H1 (cell line): ENCODE measurements at regions of chr11 and their contacts with region 1.

Region 1: DNA sequence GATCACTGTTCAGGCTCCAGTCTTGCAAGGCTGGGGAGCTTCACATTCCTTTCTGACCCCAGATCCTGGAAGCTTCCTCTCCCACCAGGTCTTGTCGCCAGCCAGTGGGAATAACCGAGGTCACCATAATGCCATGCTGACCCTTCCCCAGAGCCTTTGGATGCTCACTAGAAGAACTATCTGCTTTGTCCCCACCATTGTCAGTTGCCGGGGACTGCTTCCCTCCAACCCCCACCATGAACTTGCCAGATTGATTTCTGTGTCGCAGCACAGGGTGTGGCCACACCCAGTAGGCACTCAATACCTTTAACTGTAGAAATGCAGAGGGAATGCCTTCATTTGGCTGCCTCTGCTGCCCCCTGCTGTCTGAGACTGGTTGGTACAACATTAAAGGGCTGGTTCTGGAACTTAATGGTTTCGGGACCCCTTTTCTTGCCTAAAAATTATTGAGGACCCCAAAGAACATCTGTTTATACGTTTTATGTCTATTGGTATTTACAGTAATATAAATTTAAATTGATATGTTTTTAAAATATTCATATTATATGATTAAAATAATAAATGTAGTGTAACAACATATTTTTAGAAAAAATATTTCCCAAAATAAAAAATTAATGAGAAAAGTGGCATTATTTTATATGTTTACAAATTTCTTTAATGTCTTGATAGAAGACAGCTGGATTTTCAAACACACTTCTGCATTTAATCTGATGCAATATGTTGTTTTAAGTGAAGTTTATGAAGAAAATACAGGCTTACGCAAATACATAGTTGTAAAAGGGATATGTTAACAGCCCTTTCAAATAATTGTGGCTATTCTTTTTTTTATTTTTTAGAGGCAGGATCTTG is 6.7 kb upstream of the GDPD5 start:
- DNase-seq: peak in 1 of 2 experiments; percentile 92
- H3K4me3 ChIP-seq: peak overlapping the region in 3 of 4 experiments; percentile 5 to 43 (median 17); a peak in 1 of 8 replicates
- H3K27ac ChIP-seq: no peak overlapping the region
- H3K4me1 ChIP-seq: peaks cover 0 to 5% (median under 1%) of the 10 kb centered on the region in 4 experiments; a peak in 1 of 7 replicates
- H3K27me3 ChIP-seq: no peaks in the 10 kb centered on the region
- CTCF ChIP-seq: peak; percentile 63 to 88 (median 87)
- EP300 ChIP-seq: no peak
- POLR2A ChIP-seq: no peak
- RAD21 ChIP-seq: peak; percentile 92 to 95

Region 2: GRCh38 chr11:75406338-75406777 is 126.1 kb before region 1 on chr11:
- CTCF ChIA-PET with region 1: interaction called, 10 read pairs
- POLR2A ChIA-PET with region 1: interaction called, 9 read pairs
- DNase-seq: no peak
- H3K4me3 ChIP-seq: no peak overlapping the region
- H3K27ac ChIP-seq: no peak overlapping the region
- H3K4me1 ChIP-seq: peaks cover 0 to 9% (median 2%) of the 10 kb centered on the region in 4 experiments; a peak in 3 of 7 replicates
- H3K27me3 ChIP-seq: no peaks in the 10 kb centered on the region
- CTCF ChIP-seq: no peak
- EP300 ChIP-seq: no peak
- POLR2A ChIP-seq: no peak; a peak in 1 of 3 replicates
- RAD21 ChIP-seq: no peak

Region 3: GRCh38 chr11:75437966-75438659 is 94.3 kb before region 1 on chr11:
- CTCF ChIA-PET with region 1: interaction called, 318 read pairs
- POLR2A ChIA-PET with region 1: interaction called, 3 read pairs
- DNase-seq: no peak
- H3K4me3 ChIP-seq: no peak overlapping the region
- H3K27ac ChIP-seq: no peak overlapping the region
- H3K4me1 ChIP-seq: peaks cover 0 to 21% (median 6%) of the 10 kb centered on the region in 4 experiments; a peak in 5 of 7 replicates
- H3K27me3 ChIP-seq: peaks cover 0 to 9% (median 4%) of the 10 kb centered on the region in 4 experiments; a peak in 4 of 7 replicates
- CTCF ChIP-seq: no peak
- EP300 ChIP-seq: no peak
- POLR2A ChIP-seq: no peak
- RAD21 ChIP-seq: no peak

Region 4: DNA sequence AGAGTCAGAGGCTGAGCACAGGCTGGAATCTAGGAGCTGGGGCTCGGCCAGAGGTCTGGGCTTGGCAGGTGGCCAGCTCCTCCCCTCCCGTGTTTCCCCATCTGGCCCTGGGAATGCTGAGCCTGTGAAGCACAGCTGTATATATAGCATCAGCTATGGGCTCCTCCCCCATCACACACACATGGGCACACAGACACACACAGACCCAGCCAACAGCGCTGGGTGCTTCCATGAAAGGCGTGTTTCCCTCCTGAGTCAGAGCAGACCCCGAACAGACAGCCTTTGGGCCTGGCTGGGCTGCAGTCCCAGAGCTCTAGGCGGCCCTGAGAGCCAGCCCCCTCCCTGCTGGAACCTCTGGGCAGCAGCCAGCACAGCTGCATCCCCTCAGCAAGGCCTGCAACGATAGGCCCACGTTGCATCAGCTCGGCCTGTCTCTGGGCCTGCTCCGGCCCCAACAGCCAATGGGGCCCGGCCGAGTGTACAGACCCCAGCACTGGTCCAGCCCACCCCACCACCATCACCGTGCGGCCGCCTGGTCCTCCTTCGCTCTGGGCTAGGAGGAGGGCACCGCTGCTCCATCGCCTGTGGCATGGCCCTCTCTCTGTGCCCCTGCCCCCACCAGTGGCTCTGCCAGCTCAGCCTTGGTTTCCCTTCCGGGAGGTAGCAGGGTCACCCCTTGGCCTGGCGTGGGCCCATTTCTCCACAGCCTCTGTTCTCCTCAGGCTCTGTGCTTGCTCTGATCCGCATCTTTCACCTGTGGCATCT is 22.0 kb after region 1 on chr11:
- CTCF ChIA-PET with region 1: interaction called, 9 read pairs
- POLR2A ChIA-PET with region 1: interaction called, 11 read pairs
- DNase-seq: peak in 1 of 2 experiments; percentile 83
- H3K4me3 ChIP-seq: no peak overlapping the region; a peak in 1 of 8 replicates
- H3K27ac ChIP-seq: peak overlapping the region; percentile 55; the same call in 1 of the 2 replicates
- H3K4me1 ChIP-seq: peaks cover 4 to 26% (median 19%) of the 10 kb centered on the region in 4 experiments
- H3K27me3 ChIP-seq: no peaks in the 10 kb centered on the region
- CTCF ChIP-seq: no peak
- EP300 ChIP-seq: no peak; a peak in 1 of 3 replicates
- POLR2A ChIP-seq: 0 out of 3 replicates have a peak, but pooled peaks of 1 of the 2 experiments have one; percentile 65
- RAD21 ChIP-seq: no peak

Region 5: GRCh38 chr11:75577207-75577606 is 44.8 kb after region 1 on chr11:
- CTCF ChIA-PET with region 1: interaction called, 41 read pairs
- POLR2A ChIA-PET with region 1: interaction called, 16 read pairs
- DNase-seq: peak in 1 of 2 experiments; percentile 88
- H3K4me3 ChIP-seq: no peak overlapping the region
- H3K27ac ChIP-seq: no peak overlapping the region
- H3K4me1 ChIP-seq: peaks cover 0 to 5% (median 2%) of the 10 kb centered on the region in 4 experiments; a peak in 4 of 7 replicates
- H3K27me3 ChIP-seq: no peaks in the 10 kb centered on the region
- CTCF ChIP-seq: peak; percentile 61 to 80 (median 61)
- EP300 ChIP-seq: no peak
- POLR2A ChIP-seq: no peak
- RAD21 ChIP-seq: peak in 1 of 2 experiments; percentile 40; a peak in 1 of 4 replicates

Region 6: GRCh38 chr11:75888416-75888815 is 356.0 kb after region 1 on chr11:
- CTCF ChIA-PET with region 1: no interaction called
- POLR2A ChIA-PET with region 1: no interaction called
- DNase-seq: no peak
- H3K4me3 ChIP-seq: no peak overlapping the region
- H3K27ac ChIP-seq: no peak overlapping the region
- H3K4me1 ChIP-seq: no peaks in the 10 kb centered on the region
- H3K27me3 ChIP-seq: no peaks in the 10 kb centered on the region
- CTCF ChIP-seq: no peak
- EP300 ChIP-seq: no peak
- POLR2A ChIP-seq: no peak
- RAD21 ChIP-seq: no peak

Region 7: GRCh38 chr11:76030286-76030685 is 497.9 kb after region 1 on chr11:
- CTCF ChIA-PET with region 1: no interaction called
- POLR2A ChIA-PET with region 1: no interaction called
- DNase-seq: no peak
- H3K4me3 ChIP-seq: no peak overlapping the region
- H3K27ac ChIP-seq: no peak overlapping the region
- H3K4me1 ChIP-seq: peaks cover 0 to 4% (median 0%) of the 10 kb centered on the region in 4 experiments; a peak in 3 of 7 replicates
- H3K27me3 ChIP-seq: no peaks in the 10 kb centered on the region
- CTCF ChIP-seq: no peak
- EP300 ChIP-seq: no peak
- POLR2A ChIP-seq: no peak
- RAD21 ChIP-seq: no peak